Thyroid gland (tissue), 4 donors: ENCODE measurements at regions of chr17 and their contacts with region 1.

Region 1: DNA sequence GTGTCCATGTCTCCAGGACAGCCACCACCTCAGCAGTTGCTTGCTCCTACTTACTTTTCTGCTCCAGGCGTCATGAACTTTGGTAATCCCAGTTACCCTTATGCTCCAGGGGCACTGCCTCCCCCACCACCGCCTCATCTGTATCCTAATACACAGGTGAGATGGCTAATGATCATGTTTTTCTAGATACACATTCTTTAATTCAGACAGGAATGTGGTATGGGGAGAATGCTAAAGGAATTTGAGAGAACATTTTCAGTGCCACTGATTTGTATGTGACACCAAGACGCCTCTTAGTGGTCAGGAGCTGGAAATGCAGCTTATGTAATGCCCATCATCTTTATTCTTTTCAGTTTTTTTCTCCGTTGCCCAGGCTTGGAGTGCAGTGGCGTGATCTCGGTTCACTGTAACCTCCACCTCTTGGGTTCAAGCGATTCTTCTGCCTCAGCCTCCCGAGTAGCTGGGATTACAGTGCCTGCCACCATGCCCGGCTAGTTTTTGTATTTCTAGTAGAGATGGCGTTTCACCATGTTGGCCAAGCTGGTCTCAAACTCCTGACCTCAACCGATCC is 8.9 kb upstream of the RAPGEFL1 start:
- DNase-seq: peak; percentile 42 to 46
- H3K4me3 ChIP-seq: no peak overlapping the region
- H3K27ac ChIP-seq: peak overlapping the region; percentile 45 to 66 (median 66)
- H3K4me1 ChIP-seq: peaks cover 12 to 21% of the 10 kb centered on the region in 2 donors
- H3K27me3 ChIP-seq: no peaks in the 10 kb centered on the region
- CTCF ChIP-seq: peak; percentile 54 to 99 (median 90)
- POLR2A ChIP-seq: no peak

Region 2: DNA sequence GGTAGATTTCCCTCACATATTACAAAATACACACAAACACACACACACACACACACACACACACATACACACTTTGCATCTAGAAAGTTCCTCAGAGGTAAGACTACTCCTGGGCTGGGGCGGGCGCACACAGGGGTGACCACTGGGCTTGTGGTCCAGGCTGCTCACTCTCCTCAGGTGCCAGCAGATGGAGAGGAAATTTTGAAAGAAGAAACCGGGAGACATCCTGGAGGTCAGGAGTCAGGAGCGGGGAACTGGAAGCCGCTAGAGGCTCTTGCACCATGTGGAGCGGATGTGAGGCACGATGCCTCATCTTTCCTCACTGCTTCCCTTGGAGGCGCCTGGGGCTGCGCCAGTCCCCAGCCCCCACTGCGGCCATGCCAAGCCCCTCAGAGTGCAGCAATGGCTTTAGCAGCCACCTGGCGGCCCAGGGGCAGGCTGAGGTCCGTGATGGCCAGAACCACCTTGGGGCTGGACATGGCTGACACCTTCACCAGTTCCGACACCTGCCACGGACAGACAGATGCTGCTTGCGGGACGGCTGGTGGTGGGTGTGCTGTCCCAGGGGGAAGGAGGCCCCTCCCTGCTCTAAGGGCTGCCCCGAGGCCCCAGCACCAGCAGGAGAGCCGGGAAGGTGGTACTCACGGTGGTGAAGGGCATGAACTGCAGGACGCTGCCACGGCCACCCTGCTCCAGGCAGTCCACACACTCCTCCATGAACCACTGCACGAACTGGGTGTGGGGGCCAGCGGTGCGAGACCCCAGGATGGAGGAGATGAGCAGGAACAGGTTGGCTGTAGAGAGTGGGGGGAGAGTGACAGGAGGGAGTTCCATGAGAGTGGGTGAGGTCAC is 149.0 kb before region 1 on chr17:
- intact Hi-C with region 1: loop called (anchors 5 kb)
- DNase-seq: no peak
- H3K4me3 ChIP-seq: no peak overlapping the region
- H3K27ac ChIP-seq: no peak overlapping the region
- H3K4me1 ChIP-seq: peaks cover 37 to 57% of the 10 kb centered on the region in 2 donors
- H3K27me3 ChIP-seq: no peaks in the 10 kb centered on the region
- CTCF ChIP-seq: no peak
- POLR2A ChIP-seq: no peak

Region 3: DNA sequence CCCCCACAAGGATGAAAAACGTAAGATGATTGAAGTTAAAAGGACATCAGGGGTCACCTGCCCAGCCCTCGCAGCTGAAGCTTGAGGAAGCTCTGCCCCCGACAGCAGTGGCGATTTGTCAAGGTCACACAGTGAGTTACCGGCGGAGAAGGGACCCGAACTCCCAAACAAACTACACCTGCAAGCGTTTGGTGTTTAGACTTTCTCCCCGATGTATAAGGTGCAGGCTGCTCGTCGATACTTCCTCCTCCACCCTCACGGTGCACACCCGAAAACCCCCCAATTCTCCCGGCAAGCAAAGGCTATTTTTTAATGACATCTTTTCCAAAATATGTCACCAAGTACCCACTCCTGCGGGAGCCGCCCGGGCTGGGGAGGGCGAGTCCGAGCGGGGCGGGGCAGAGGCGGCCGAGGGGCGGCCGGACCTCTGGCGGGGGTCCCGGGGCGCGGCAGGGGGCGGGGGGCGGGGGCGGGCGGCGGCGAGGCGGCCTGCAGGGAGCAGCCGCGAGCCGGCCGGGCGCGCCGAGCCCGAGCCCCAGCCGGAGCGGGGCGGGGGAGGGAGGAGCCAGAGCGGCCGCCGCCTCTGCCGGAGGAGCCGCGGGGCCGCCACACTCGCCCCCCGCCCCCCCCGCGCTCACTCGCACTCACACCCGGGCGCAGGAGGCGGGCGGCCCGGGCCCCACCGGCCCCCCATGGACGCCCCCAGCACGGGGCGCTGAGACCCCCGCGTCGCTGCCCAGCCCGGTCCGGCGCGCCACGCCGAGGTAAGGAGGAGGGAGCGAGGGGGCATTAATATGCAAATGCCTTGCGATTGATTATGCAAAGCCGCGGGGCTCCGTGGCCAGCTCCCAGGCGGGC is 105.8 kb before region 1 on chr17 and contains the start of gene THRA:
- intact Hi-C with region 1: loop called (anchors 10 kb)
- DNase-seq: peak; percentile 76 to 80
- H3K4me3 ChIP-seq: peak within 1 kb of the TSS; percentile 94 to 99 (median 97)
- H3K27ac ChIP-seq: peak within 1 kb of the TSS; percentile 95 to 98 (median 98)
- H3K4me1 ChIP-seq: peaks cover 27 to 38% of the 10 kb centered on the region in 2 donors
- H3K27me3 ChIP-seq: no peaks in the 10 kb centered on the region
- CTCF ChIP-seq: peak in 2 of 6 experiments; percentile 3 to 33
- POLR2A ChIP-seq: peak in 1 of 2 donors; percentile 58
- total RNA-seq, gene THRA: 34.0 to 52.9 (median 44.8) TPM

Region 4: DNA sequence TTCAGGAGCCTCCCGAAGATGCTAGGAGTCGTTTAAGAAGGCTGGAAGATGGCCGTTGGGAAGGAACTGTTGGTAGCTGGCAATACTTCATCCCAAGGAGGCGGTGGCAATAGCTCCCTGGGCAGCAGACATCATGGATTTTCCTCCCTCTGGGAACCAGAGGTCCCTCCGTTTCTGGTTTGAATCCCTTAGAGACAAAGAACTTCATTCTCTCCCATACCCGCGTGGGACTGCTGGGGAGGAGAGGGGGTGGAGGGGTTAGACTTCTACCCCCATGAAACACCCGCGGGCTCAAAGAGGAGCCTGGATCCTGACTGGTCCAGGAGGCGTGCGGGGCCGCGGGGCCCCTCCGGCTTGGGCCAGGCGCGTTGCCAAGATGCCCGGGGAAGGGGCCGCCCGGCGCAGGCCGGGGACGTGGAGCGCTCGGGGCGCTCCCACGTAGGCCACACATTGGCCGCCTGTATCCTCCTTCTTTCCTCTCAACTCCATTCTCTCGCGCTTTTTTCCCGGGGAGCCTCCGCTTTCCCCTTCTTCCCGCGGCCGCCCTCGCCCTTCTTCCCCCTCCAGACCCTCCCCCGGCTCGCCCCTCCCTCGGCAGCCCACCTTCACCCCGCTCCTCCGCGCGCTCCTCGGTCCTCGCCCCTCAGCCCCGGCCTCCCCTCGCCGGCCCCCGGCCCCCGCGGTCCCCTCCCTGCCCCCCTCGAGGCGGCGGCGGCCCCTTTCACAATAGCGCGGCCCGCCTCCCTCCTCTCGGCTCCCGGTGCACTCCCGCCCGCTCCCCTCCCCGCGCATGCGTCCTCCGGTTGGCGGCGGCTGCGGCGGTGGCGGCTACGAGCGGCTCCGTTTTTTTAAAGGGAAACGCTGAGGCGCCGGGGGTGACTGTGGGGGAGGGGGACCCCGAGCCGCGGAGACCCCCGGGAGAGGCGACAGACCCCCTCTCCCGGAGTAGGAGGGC is 46.9 kb before region 1 on chr17 and contains the start of gene MSL1:
- intact Hi-C with region 1: loop called (anchors 5 kb)
- DNase-seq: peak; percentile 87 to 88
- H3K4me3 ChIP-seq: peak within 1 kb of the TSS; percentile 75 to 99 (median 86)
- H3K27ac ChIP-seq: peak within 1 kb of the TSS; percentile 87 to 97 (median 97)
- H3K4me1 ChIP-seq: peaks cover 14 to 15% of the 10 kb centered on the region in 2 donors
- H3K27me3 ChIP-seq: no peaks in the 10 kb centered on the region
- CTCF ChIP-seq: no peak
- POLR2A ChIP-seq: peak; percentile 36 to 70
- total RNA-seq, gene MSL1: 69.9 to 101 (median 80.4) TPM

Region 5: DNA sequence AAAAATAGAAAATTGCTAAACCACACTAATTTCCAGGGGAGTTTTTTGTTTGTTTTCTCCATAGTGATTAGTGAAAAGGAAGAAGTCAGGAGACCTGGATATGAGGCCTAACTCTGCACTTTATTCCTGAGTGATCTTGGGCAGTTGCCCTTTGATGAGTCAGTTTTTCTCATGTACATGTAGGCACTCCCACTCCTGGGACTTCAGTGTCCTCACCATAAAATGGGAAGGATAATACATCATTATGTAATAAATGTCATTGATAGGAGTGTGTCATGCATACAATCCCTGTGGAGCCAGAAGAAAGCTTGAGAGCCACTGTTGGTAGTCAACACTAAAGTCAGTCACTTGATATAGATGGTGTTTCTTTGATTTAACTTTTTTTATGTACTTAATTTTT is 83.2 kb after region 1 on chr17:
- intact Hi-C with region 1: no loop called
- DNase-seq: peak in 1 of 2 donors; percentile 20
- H3K4me3 ChIP-seq: no peak overlapping the region
- H3K27ac ChIP-seq: no peak overlapping the region
- H3K4me1 ChIP-seq: peaks cover 14 to 17% of the 10 kb centered on the region in 2 donors
- H3K27me3 ChIP-seq: no peaks in the 10 kb centered on the region
- CTCF ChIP-seq: no peak
- POLR2A ChIP-seq: no peak